CD8-positive, alpha-beta T cell (primary cell): ENCODE measurements at regions of chr1 and their contacts with region 1.

Region 1: DNA sequence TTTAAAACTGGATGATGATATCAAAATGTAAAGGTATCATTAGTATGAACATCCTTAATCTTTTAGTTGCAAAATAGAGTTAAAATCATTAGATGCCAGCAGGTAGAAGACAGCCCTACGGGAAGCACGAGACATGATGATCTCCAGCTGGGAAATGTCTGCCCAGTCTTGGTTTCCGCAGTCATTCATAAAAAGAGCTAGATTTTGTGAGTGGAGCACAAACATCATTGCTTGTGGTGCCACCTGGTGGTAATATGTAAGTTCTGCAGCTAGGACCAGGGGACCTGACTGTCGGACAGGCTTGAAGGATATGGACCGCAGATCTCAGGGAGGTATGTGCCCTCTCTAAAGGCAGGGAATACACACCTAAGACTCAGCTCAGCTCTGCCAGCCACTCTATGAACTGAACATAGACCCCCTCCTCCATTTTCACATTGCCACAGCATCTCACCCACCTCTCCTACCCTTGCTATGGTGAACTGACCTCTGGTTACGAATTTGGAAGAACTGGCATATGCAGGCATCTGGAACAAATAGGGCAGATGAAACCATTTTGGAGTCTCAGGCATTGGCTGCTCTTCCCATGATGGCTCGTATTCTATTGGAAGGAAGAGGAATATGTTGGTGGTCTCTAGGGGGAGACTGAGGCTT is 9.2 kb downstream of the FCMR start:
- DNase-seq: peak in 7 of 9 experiments; percentile 37 to 85 (median 67)
- ATAC-seq: peak; percentile 48
- H3K4me3 ChIP-seq: no peak overlapping the region
- H3K4me3 Mint-ChIP-seq: peak overlapping the region; percentile 69
- H3K27ac ChIP-seq: peak overlapping the region in 1 of 2 experiments; percentile 95
- H3K27ac Mint-ChIP-seq: peak overlapping the region; percentile 97
- H3K4me1 ChIP-seq: peaks cover 94% of the 10 kb centered on the region
- H3K4me1 Mint-ChIP-seq: peaks cover 91% of the 10 kb centered on the region
- H3K27me3 ChIP-seq: no peaks in the 10 kb centered on the region
- H3K27me3 Mint-ChIP-seq: no peaks in the 10 kb centered on the region
- CTCF ChIP-seq: peak; percentile 88

Region 2: DNA sequence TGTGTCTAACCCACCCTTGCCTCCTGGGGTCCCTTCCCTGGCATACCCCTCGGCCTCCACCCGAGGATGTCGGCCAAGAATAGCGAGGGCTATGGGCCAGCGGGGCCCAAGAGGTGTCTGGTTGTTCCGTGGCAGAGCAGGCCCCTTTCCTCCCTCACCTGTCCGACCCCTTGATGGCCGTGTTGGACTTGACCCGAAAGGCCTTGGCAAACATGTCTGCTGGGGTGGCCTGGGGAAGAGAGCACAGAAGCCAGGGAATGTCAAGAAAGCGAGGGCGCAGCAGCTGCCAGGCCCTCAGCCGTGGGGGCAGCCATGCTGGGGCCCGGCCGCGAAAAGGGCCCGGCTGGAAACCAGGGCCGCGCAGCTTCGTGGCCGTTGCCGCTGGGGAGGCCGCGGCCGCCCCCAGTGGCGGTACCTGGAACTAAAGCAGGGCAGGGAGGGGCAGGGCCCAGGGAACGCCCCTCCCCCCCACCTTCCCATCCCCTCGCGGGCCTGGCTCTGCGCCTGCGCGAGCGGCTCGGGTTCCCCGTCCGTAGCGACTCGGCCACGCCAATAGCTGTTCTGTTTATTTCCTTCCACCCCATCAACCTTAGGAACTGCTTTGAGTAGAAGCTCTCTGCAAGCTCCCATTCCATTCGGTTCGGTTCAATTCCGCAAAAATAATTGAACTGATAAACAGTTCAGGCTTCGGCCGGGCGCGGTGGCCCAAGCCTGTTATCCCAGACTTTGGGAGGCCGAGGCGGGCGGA is 300.3 kb before region 1 on chr1 and contains the start of gene EIF2D:
- CTCF ChIA-PET with region 1: no interaction called
- POLR2A ChIA-PET with region 1: interaction called, 3 read pairs
- intact Hi-C with region 1: loop called in 1 of 2 experiments (anchors 5 kb)
- DNase-seq: peak; percentile 89 to 96 (median 94)
- ATAC-seq: peak; percentile 99
- H3K4me3 ChIP-seq: peak within 1 kb of the TSS; percentile 90 to 91
- H3K4me3 Mint-ChIP-seq: peak within 1 kb of the TSS; percentile 92
- H3K27ac ChIP-seq: peak within 1 kb of the TSS; percentile 84 to 86
- H3K27ac Mint-ChIP-seq: peak within 1 kb of the TSS; percentile 96
- H3K4me1 ChIP-seq: peaks cover 9% of the 10 kb centered on the region
- H3K4me1 Mint-ChIP-seq: peaks cover 17% of the 10 kb centered on the region
- H3K27me3 ChIP-seq: no peaks in the 10 kb centered on the region
- H3K27me3 Mint-ChIP-seq: no peaks in the 10 kb centered on the region
- CTCF ChIP-seq: peak; percentile 91
- total RNA-seq, gene EIF2D: 42.0 to 49.2 TPM

Region 3: DNA sequence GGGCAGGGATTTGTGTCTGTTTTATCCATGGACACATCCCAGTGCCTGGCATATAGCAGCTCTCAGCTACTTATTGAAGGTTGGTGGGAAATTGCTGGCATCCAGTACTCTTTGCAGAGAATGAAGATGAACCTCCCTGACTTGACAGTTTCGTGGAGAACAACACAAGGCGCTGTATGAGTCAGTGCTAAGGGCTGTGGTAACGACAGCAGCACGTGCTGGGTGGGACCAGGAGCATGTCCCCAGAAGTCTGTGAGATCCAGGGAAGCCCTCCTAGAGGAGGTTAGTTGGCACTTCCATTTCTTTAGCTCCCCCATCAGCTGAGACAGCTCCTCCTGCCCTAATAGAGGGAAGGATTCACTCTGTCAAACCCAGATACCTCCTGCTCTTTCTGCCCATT is 167.9 kb before region 1 on chr1:
- CTCF ChIA-PET with region 1: interaction called, 14 read pairs
- POLR2A ChIA-PET with region 1: interaction called, 4 read pairs
- intact Hi-C with region 1: no loop called
- DNase-seq: peak in 1 of 9 experiments; percentile 50
- ATAC-seq: peak; percentile 45
- H3K4me3 ChIP-seq: no peak overlapping the region
- H3K4me3 Mint-ChIP-seq: no peak overlapping the region
- H3K27ac ChIP-seq: no peak overlapping the region
- H3K27ac Mint-ChIP-seq: peak overlapping the region; percentile 46
- H3K4me1 ChIP-seq: peaks cover 11% of the 10 kb centered on the region
- H3K4me1 Mint-ChIP-seq: peaks cover 40% of the 10 kb centered on the region
- H3K27me3 ChIP-seq: no peaks in the 10 kb centered on the region
- H3K27me3 Mint-ChIP-seq: no peaks in the 10 kb centered on the region
- CTCF ChIP-seq: no peak

Region 4: GRCh38 chr1:206833106-206833680 is 79.4 kb before region 1 on chr1:
- CTCF ChIA-PET with region 1: interaction called, 15 read pairs
- POLR2A ChIA-PET with region 1: no interaction called
- intact Hi-C with region 1: no loop called
- DNase-seq: no peak
- ATAC-seq: no peak
- H3K4me3 ChIP-seq: no peak overlapping the region
- H3K4me3 Mint-ChIP-seq: no peak overlapping the region
- H3K27ac ChIP-seq: no peak overlapping the region
- H3K27ac Mint-ChIP-seq: no peak overlapping the region
- H3K4me1 ChIP-seq: peaks cover 25% of the 10 kb centered on the region
- H3K4me1 Mint-ChIP-seq: peaks cover 47% of the 10 kb centered on the region
- H3K27me3 ChIP-seq: no peaks in the 10 kb centered on the region
- H3K27me3 Mint-ChIP-seq: no peaks in the 10 kb centered on the region
- CTCF ChIP-seq: no peak

Region 5: DNA sequence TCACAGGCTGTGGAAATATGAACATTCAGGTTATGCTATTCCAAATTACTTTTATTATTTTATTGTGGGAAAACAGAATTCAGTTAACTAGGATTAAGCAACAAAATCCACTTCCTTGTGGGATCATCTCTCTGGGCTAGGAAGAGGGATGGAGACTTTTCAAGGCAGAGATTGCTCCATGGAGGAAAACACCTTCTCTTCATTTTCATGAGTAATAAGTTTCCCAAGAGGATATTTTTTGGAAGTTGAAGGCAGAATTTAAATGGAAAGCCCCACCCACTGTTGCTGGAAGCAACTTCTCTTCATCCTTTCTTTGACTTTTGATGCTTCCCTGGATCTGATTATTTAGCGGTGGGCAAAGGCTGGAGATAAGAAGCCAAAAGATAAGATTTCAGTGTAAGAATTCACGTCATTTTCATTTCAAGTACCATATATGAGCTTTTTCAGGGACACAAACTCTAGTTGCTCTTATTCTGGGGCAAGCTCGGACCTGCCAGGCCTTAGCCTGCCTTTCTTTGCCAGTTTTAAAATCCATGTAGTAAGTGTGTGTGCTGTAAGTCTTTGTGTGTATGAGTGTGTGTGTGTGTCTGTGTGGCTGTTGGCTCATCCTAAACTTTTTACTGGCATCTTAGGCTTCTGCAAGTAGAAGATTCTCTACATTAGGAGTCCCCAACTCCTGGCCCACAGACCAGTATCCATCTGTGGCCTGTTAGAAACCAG is 27.1 kb before region 1 on chr1:
- CTCF ChIA-PET with region 1: interaction called, 13 read pairs
- POLR2A ChIA-PET with region 1: interaction called, 3 read pairs
- intact Hi-C with region 1: no loop called
- DNase-seq: no peak
- ATAC-seq: no peak
- H3K4me3 ChIP-seq: no peak overlapping the region
- H3K4me3 Mint-ChIP-seq: no peak overlapping the region
- H3K27ac ChIP-seq: no peak overlapping the region
- H3K27ac Mint-ChIP-seq: no peak overlapping the region
- H3K4me1 ChIP-seq: peaks cover 4% of the 10 kb centered on the region
- H3K4me1 Mint-ChIP-seq: peaks cover 14% of the 10 kb centered on the region
- H3K27me3 ChIP-seq: no peaks in the 10 kb centered on the region
- H3K27me3 Mint-ChIP-seq: no peaks in the 10 kb centered on the region
- CTCF ChIP-seq: no peak

Region 6: DNA sequence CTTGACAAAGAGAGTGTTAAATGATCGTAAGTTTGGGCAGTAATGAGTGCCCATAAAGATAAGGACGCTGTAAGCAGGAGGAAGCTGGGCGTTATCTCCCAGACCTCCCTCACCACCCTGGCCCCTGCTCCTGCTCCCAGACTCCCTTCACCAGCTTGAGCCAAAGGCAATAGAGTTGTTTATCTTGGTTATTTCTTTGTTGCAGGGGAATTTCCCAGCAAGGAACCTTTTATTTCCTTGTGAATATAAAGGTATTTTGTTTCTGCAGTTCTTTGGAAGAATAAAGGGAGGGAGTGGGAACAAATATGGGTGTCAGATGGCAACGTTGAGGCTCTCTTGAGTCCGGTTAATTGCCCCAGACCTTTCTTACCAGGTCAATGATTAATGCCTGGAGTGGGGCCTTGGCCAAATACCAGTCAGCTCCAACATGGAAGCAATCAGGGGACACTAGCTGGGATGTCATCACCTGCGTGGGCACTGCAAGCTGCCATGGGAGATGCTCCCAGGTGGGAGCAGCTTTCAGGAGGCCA is 29.4 kb after region 1 on chr1:
- CTCF ChIA-PET with region 1: interaction called, 395 read pairs
- POLR2A ChIA-PET with region 1: interaction called, 3 read pairs
- intact Hi-C with region 1: no loop called
- DNase-seq: no peak
- ATAC-seq: no peak
- H3K4me3 ChIP-seq: no peak overlapping the region
- H3K4me3 Mint-ChIP-seq: no peak overlapping the region
- H3K27ac ChIP-seq: no peak overlapping the region
- H3K27ac Mint-ChIP-seq: no peak overlapping the region
- H3K4me1 ChIP-seq: no peaks in the 10 kb centered on the region
- H3K4me1 Mint-ChIP-seq: peaks cover 4% of the 10 kb centered on the region
- H3K27me3 ChIP-seq: no peaks in the 10 kb centered on the region
- H3K27me3 Mint-ChIP-seq: peaks cover 4% of the 10 kb centered on the region
- CTCF ChIP-seq: no peak